ENCODE measurements at regions of chr13 and their contacts with region 1.

Region 1: DNA sequence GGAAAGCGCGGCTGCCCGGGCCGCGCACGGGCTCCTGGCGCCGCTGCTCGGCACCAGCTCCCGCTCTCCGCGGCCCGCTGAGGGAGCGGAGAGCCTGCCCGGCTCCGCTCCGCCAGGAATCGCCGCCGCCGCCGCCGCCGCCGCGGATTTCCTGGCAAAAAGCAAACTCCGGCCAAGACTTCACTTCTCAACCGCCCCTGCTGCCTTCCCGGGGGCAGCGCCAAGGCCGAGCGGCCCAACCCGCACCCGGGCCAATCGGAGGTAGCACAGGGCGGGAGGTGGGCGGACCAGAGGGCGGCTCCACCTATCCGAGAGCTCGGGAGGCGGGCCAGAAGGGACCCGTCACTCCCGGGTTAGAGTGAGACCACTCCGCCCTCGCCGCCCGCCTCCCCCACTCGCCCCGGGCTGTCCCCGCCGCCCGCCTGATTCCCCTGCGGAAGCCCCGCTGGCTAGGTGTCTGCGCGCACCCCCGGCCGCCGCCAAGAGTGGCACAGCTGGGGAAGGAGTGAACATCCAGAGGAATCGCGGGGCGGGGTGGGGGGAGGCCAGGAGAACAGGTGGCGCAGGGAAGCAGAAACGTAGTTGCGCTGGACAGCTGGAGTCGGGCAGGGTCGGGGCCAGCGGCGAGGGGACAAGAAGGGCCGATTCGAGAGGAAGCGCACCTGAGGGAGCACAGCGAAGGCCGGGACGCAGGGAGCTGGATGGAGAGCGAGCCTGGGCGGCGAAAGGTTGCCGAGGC is at the start of gene LNX2:
- DNase-seq: peak; percentile 92 to 98 (median 96)
- ATAC-seq: peak; percentile 83
- H3K4me3 ChIP-seq: peak within 1 kb of the TSS; percentile 77
- H3K4me3 Mint-ChIP-seq: peak within 1 kb of the TSS; percentile 98
- H3K27ac ChIP-seq: peak within 1 kb of the TSS; percentile 97 to 98
- H3K27ac Mint-ChIP-seq: peak within 1 kb of the TSS; percentile 99
- H3K4me1 ChIP-seq: peaks cover 40% of the 10 kb centered on the region
- H3K4me1 Mint-ChIP-seq: peaks cover 72% of the 10 kb centered on the region
- H3K27me3 ChIP-seq: no peaks in the 10 kb centered on the region
- H3K27me3 Mint-ChIP-seq: no peaks in the 10 kb centered on the region
- CTCF ChIP-seq: no peak
- total RNA-seq, gene LNX2: 3.5 to 3.9 TPM

Region 2: GRCh38 chr13:27251166-27252091 is 369.1 kb before region 1 on chr13 and contains the start of gene RPL21:
- CTCF ChIA-PET with region 1: no interaction called
- POLR2A ChIA-PET with region 1: interaction called, 11 read pairs
- intact Hi-C with region 1: loop called in 1 of 2 experiments (anchors 5 kb)
- DNase-seq: peak; percentile 85 to 97 (median 90)
- ATAC-seq: peak; percentile 89
- H3K4me3 ChIP-seq: peak within 1 kb of the TSS; percentile 69
- H3K4me3 Mint-ChIP-seq: peak within 1 kb of the TSS; percentile 95
- H3K27ac ChIP-seq: peak within 1 kb of the TSS; percentile 90 to 98
- H3K27ac Mint-ChIP-seq: peak within 1 kb of the TSS; percentile 99
- H3K4me1 ChIP-seq: peaks cover 23% of the 10 kb centered on the region
- H3K4me1 Mint-ChIP-seq: peaks cover 65% of the 10 kb centered on the region
- H3K27me3 ChIP-seq: no peaks in the 10 kb centered on the region
- H3K27me3 Mint-ChIP-seq: no peaks in the 10 kb centered on the region
- CTCF ChIP-seq: no peak
- total RNA-seq, gene RPL21: 2,736 to 2,941 TPM

Region 3: DNA sequence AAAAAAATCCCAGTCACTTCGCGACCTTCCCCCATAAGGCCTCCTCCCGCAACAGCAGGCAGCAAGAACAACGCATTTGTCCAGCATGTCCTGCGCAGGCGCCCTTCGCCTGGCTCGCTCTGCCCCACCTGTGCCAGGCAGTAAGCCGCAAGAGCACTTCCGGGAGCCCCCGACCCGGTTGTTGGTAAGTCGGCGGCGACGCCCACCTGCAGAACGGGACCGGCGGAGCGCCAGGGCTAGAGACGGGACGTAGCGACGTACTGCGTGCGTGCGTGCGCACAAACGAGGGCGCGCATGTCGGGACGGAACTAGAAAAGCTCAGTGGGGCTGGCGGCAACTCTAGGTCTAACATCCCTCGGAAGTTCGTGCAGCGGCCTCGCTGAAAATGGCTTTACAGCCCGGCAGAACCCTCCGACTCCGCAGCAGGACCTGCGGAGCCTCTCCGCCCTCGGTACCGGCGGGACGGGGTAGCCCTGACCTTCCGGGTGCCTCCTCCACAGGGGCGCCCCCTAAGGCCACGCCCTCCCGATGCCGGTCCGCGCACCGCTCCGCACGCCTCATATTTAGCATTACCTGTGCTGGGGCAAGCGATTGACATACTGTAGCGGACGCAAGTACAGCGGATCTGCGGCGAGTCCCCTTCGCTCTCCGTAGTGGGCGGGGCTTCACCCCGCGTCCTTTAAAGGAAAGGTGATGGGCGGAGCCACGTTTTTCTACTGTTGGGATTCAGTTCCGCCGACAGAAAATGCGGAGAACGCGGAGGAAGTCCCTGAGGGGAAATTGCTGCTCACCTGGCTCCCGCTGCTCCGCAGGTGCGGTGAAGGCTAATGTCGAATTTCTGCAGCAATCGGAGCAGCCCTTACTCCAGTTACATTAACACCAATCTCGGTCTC is 170.4 kb before region 1 on chr13 and contains the start of gene MTIF3:
- CTCF ChIA-PET with region 1: interaction called, 19 read pairs
- POLR2A ChIA-PET with region 1: interaction called, 65 read pairs
- intact Hi-C with region 1: loop called (anchors 1 kb)
- DNase-seq: peak; percentile 95 to 99 (median 97)
- ATAC-seq: peak; percentile 79
- H3K4me3 ChIP-seq: peak within 1 kb of the TSS; percentile 83
- H3K4me3 Mint-ChIP-seq: peak within 1 kb of the TSS; percentile 98
- H3K27ac ChIP-seq: peak within 1 kb of the TSS; percentile 95 to 97
- H3K27ac Mint-ChIP-seq: peak within 1 kb of the TSS; percentile 97
- H3K4me1 ChIP-seq: peaks cover 58% of the 10 kb centered on the region
- H3K4me1 Mint-ChIP-seq: peaks cover 74% of the 10 kb centered on the region
- H3K27me3 ChIP-seq: no peaks in the 10 kb centered on the region
- H3K27me3 Mint-ChIP-seq: no peaks in the 10 kb centered on the region
- CTCF ChIP-seq: peak; percentile 31
- total RNA-seq, gene MTIF3: 13.6 to 14.5 TPM

Region 4: GRCh38 chr13:27481766-27482165 is 138.8 kb before region 1 on chr13:
- CTCF ChIA-PET with region 1: no interaction called
- POLR2A ChIA-PET with region 1: interaction called, 12 read pairs
- intact Hi-C with region 1: no loop called
- DNase-seq: peak in 5 of 14 experiments; percentile 5 to 35 (median 16)
- ATAC-seq: no peak
- H3K4me3 ChIP-seq: no peak overlapping the region
- H3K4me3 Mint-ChIP-seq: no peak overlapping the region
- H3K27ac ChIP-seq: no peak overlapping the region
- H3K27ac Mint-ChIP-seq: no peak overlapping the region
- H3K4me1 ChIP-seq: peaks cover 6% of the 10 kb centered on the region
- H3K4me1 Mint-ChIP-seq: peaks cover 19% of the 10 kb centered on the region
- H3K27me3 ChIP-seq: no peaks in the 10 kb centered on the region
- H3K27me3 Mint-ChIP-seq: no peaks in the 10 kb centered on the region
- CTCF ChIP-seq: peak; percentile 30

Region 5: DNA sequence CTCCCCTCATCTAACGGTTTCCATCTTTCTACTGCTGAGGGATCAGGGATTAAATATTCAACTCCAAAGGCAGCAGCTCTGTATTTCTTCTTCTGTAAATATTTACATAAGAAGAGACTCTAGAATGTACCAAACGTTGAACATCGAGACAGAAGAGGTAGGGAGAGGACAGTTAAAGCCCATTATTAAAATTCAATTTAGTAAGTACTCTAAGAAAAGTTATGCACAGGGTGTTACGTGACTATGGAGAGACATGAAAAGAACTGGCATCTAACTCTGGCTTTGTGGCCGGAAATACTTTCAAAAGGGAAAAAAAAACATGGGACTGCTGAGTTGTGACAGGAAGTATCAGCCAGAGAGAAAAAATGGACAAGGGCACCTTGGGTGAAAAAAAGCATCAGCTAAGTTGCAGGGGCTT is 36.9 kb before region 1 on chr13:
- CTCF ChIA-PET with region 1: no interaction called
- POLR2A ChIA-PET with region 1: interaction called, 5 read pairs
- intact Hi-C with region 1: loop called (anchors 5 kb)
- DNase-seq: peak in 1 of 14 experiments; percentile 10
- ATAC-seq: peak; percentile 29
- H3K4me3 ChIP-seq: no peak overlapping the region
- H3K4me3 Mint-ChIP-seq: peak overlapping the region; percentile 14
- H3K27ac ChIP-seq: no peak overlapping the region
- H3K27ac Mint-ChIP-seq: no peak overlapping the region
- H3K4me1 ChIP-seq: peaks cover 7% of the 10 kb centered on the region
- H3K4me1 Mint-ChIP-seq: peaks cover 47% of the 10 kb centered on the region
- H3K27me3 ChIP-seq: no peaks in the 10 kb centered on the region
- H3K27me3 Mint-ChIP-seq: no peaks in the 10 kb centered on the region
- CTCF ChIP-seq: no peak

Region 6: GRCh38 chr13:27635266-27635665 is 14.7 kb after region 1 on chr13:
- CTCF ChIA-PET with region 1: interaction called, 3 read pairs
- POLR2A ChIA-PET with region 1: interaction called, 12 read pairs
- intact Hi-C with region 1: no loop called
- DNase-seq: peak in 2 of 14 experiments; percentile 8 to 16
- ATAC-seq: no peak
- H3K4me3 ChIP-seq: no peak overlapping the region
- H3K4me3 Mint-ChIP-seq: no peak overlapping the region
- H3K27ac ChIP-seq: no peak overlapping the region
- H3K27ac Mint-ChIP-seq: no peak overlapping the region
- H3K4me1 ChIP-seq: peaks cover 6% of the 10 kb centered on the region
- H3K4me1 Mint-ChIP-seq: peaks cover 89% of the 10 kb centered on the region
- H3K27me3 ChIP-seq: no peaks in the 10 kb centered on the region
- H3K27me3 Mint-ChIP-seq: no peaks in the 10 kb centered on the region
- CTCF ChIP-seq: no peak

Region 7: GRCh38 chr13:28138012-28138755 is 517.6 kb after region 1 on chr13 and contains the start of gene PAN3:
- CTCF ChIA-PET with region 1: no interaction called
- POLR2A ChIA-PET with region 1: interaction called, 7 read pairs
- intact Hi-C with region 1: loop called in 1 of 2 experiments (anchors 2 kb)
- DNase-seq: peak; percentile 85 to 97 (median 91)
- ATAC-seq: peak; percentile 50
- H3K4me3 ChIP-seq: peak within 1 kb of the TSS; percentile 81
- H3K4me3 Mint-ChIP-seq: peak within 1 kb of the TSS; percentile 95
- H3K27ac ChIP-seq: peak within 1 kb of the TSS; percentile 93 to 99
- H3K27ac Mint-ChIP-seq: peak within 1 kb of the TSS; percentile 99
- H3K4me1 ChIP-seq: peaks cover 37% of the 10 kb centered on the region
- H3K4me1 Mint-ChIP-seq: peaks cover 53% of the 10 kb centered on the region
- H3K27me3 ChIP-seq: no peaks in the 10 kb centered on the region
- H3K27me3 Mint-ChIP-seq: no peaks in the 10 kb centered on the region
- CTCF ChIP-seq: no peak
- total RNA-seq, gene PAN3: 56.9 to 59.5 TPM

Measured in CD4-positive, alpha-beta T cell (primary cell).